CD4-positive, alpha-beta T cell (primary cell): ENCODE measurements at regions of chr7 and their contacts with region 1.

Region 1: DNA sequence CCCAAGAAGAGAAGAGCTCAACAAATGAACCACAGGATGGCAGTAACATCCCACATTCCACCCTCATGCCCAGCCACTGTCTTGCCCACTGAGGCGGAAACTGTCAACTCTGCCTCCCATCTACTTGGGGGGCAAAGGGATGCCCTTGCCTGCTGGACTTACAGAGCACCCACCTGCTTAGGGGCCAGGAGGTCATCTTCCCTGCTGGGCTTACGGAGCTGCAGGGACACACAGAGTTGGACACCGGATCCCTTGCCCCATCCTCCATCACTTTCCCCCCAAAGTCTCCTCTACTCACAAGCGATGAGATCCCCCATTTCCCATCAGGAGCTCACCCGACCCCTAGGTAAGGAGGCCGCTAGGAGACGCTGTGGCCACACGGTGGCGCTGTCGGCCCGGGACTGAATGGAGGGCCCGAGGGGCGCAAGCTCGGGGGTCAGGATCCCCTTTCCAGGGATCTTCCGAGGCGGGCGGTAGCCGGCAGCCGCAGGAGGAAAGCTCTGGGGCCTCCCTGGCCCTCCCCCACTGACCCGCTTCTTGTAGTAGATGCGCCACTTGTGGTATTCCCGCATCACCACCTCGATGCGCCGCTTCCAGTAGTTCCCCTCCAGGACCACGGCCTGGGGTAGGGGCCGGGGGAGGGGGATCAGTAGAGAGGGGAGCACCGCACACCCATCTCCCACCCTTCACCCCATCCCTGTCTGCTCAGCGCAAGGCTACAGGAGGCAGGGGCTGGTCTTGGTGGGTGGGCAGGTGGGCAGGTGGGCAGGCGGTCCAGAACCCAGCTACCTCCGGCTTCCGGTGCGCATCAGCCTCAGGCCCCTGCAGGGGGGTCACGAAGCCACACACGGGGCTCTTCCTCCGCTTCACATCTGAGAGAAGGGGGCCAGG is 17.3 kb downstream of the MLXIPL start:
- DNase-seq: peak; percentile 45 to 80 (median 60)
- ATAC-seq: peak; percentile 86
- H3K4me3 ChIP-seq: no peak overlapping the region
- H3K4me3 Mint-ChIP-seq: no peak overlapping the region
- H3K27ac ChIP-seq: no peak overlapping the region
- H3K27ac Mint-ChIP-seq: no peak overlapping the region
- H3K4me1 ChIP-seq: peaks cover 8% of the 10 kb centered on the region
- H3K4me1 Mint-ChIP-seq: no peaks in the 10 kb centered on the region
- H3K27me3 ChIP-seq: peaks cover 14% of the 10 kb centered on the region in 2 experiments
- H3K27me3 Mint-ChIP-seq: peaks cover 36% of the 10 kb centered on the region
- CTCF ChIP-seq: peak; percentile 97

Region 2: DNA sequence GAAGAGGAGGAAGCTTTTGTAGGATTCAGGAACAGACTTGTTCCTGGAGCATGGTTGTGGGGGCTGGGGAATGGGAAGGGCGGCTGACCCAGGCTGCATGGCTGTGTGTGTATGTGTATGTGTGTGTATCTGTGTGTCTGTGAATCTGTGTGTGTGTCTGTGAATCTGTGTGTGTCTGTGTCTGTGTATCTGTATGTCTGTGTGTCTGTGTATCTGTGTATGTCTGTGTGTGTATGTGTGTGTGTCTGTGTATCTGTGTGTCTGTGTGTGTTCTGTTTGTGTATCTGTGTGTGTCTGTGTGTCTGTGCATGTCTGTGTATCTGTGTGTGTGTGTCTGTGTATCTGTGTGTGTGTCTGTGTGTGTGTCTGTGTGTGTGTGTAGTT is 119.0 kb after region 1 on chr7:
- CTCF ChIA-PET with region 1: interaction called, 41 read pairs
- POLR2A ChIA-PET with region 1: interaction called, 3 read pairs
- intact Hi-C with region 1: loop called (anchors 1 kb)
- DNase-seq: no peak
- ATAC-seq: peak; percentile 7
- H3K4me3 ChIP-seq: no peak overlapping the region
- H3K4me3 Mint-ChIP-seq: no peak overlapping the region
- H3K27ac ChIP-seq: no peak overlapping the region
- H3K27ac Mint-ChIP-seq: no peak overlapping the region
- H3K4me1 ChIP-seq: peaks cover 6% of the 10 kb centered on the region
- H3K4me1 Mint-ChIP-seq: no peaks in the 10 kb centered on the region
- H3K27me3 ChIP-seq: peaks cover 6 to 11% of the 10 kb centered on the region in 2 experiments
- H3K27me3 Mint-ChIP-seq: peaks cover 9% of the 10 kb centered on the region
- CTCF ChIP-seq: peak; percentile 26

Region 3: GRCh38 chr7:73851410-73852234 is 244.6 kb after region 1 on chr7:
- CTCF ChIA-PET with region 1: no interaction called
- POLR2A ChIA-PET with region 1: no interaction called
- intact Hi-C with region 1: loop called (anchors 1 kb)
- DNase-seq: peak in 3 of 14 experiments; percentile 44 to 69 (median 59)
- ATAC-seq: peak; percentile 74
- H3K4me3 ChIP-seq: no peak overlapping the region
- H3K4me3 Mint-ChIP-seq: peak overlapping the region; percentile 42
- H3K27ac ChIP-seq: no peak overlapping the region
- H3K27ac Mint-ChIP-seq: peak overlapping the region; percentile 63
- H3K4me1 ChIP-seq: peaks cover 15% of the 10 kb centered on the region
- H3K4me1 Mint-ChIP-seq: peaks cover 6% of the 10 kb centered on the region
- H3K27me3 ChIP-seq: peaks cover 0 to 6% of the 10 kb centered on the region in 2 experiments
- H3K27me3 Mint-ChIP-seq: peaks cover 20% of the 10 kb centered on the region
- CTCF ChIP-seq: no peak